ENCODE measurements at regions of chr2 and their contacts with region 1.

Region 1: DNA sequence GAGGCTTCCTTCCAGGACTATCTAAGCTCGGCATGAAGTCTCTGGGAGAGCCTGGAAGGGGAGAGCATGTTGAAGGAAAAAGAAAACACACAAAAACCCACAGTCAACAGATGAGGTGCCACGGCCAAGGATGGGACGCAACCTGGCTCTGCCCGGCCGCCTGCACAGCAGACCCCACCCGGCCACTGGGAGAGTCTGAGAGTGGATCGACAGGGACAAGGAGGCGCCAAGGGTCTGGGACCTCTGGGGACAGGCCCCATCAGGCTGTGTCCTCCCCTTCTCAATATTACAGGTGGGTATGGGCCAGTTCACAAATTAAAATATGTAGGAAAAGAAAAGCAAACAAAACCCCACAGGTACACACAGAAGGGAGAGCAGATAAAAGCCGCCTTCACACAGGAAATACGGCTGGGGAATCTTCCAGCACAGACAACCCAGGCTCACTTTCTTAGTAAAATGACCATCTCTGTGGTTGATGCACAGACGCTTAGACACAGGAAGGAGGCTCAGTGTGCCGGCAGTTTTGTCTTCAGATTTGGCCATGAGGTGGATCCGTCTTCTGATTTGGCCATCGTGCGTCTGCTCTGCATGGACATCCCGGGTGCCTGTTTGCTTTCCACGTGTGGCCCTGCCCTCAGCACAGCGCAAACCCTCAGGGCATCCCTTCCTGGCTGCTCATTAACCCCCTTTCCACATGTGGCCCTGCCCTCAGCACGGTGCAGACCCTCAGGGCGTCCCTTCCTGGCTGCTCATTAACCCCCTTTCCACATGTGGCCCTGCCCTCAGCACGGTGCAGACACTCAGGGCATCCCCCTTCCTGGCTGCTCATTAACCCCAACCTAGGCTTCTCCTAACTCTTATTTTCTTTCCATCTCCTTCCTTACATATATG is 138.4 kb downstream of the EIPR1 start:
- DNase-seq: no peak
- H3K4me3 ChIP-seq: no peak overlapping the region
- H3K27ac ChIP-seq: no peak overlapping the region
- H3K4me1 ChIP-seq: peaks cover 6% of the 10 kb centered on the region
- H3K27me3 ChIP-seq: no peaks in the 10 kb centered on the region
- CTCF ChIP-seq: no peak

Region 2: GRCh38 chr2:3270095-3270478 is 30.9 kb after region 1 on chr2:
- CTCF ChIA-PET with region 1: interaction called, 5 read pairs
- dilution Hi-C with region 1: loop called (anchors 5 kb)
- in situ Hi-C with region 1: no loop called
- intact Hi-C with region 1: no loop called
- DNase-seq: no peak
- H3K4me3 ChIP-seq: no peak overlapping the region
- H3K27ac ChIP-seq: no peak overlapping the region
- H3K4me1 ChIP-seq: no peaks in the 10 kb centered on the region
- H3K27me3 ChIP-seq: no peaks in the 10 kb centered on the region
- CTCF ChIP-seq: no peak

Region 3: GRCh38 chr2:3324404-3325281 is 85.4 kb after region 1 on chr2:
- CTCF ChIA-PET with region 1: no interaction called
- dilution Hi-C with region 1: no loop called
- in situ Hi-C with region 1: no loop called
- intact Hi-C with region 1: no loop called
- DNase-seq: no peak
- H3K4me3 ChIP-seq: no peak overlapping the region
- H3K27ac ChIP-seq: no peak overlapping the region
- H3K4me1 ChIP-seq: no peaks in the 10 kb centered on the region
- H3K27me3 ChIP-seq: no peaks in the 10 kb centered on the region
- CTCF ChIP-seq: no peak

Region 4: GRCh38 chr2:3500326-3500899 is 261.2 kb after region 1 on chr2:
- CTCF ChIA-PET with region 1: no interaction called
- dilution Hi-C with region 1: no loop called
- in situ Hi-C with region 1: no loop called
- intact Hi-C with region 1: no loop called
- DNase-seq: no peak
- H3K4me3 ChIP-seq: no peak overlapping the region
- H3K27ac ChIP-seq: no peak overlapping the region
- H3K4me1 ChIP-seq: no peaks in the 10 kb centered on the region
- H3K27me3 ChIP-seq: no peaks in the 10 kb centered on the region
- CTCF ChIP-seq: no peak

Measured in mammary epithelial cell (primary cell).